OCI-LY7 (cell line): ENCODE measurements at regions of chr6 and their contacts with region 1.

Region 1: DNA sequence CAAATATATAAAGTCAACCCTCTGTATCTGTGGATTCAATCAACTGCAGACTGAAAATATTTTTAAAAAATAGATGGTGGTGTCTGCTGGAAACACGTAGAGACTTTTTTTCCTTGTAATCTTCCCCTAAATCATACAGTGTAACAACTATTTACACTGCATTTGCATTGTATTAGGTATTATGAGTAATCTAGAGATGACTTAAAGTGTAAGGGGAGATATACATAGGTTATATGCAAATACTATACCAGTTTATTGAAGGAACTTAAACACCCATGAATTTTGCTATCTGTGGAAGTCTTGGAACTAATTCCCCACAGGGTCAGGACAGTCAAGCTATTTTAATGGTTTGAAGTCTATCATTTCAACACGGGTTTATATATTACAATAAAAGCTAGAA is 10.2 kb downstream of the HDAC2 start:
- DNase-seq: no peak
- H3K4me3 ChIP-seq: no peak overlapping the region
- H3K27ac ChIP-seq: no peak overlapping the region
- H3K4me1 ChIP-seq: no peaks in the 10 kb centered on the region
- CTCF ChIP-seq: no peak

Region 2: GRCh38 chr6:113873043-113873667 is 87.6 kb before region 1 on chr6:
- CTCF ChIA-PET with region 1: no interaction called
- POLR2A ChIA-PET with region 1: no interaction called
- intact Hi-C with region 1: no loop called
- DNase-seq: peak; percentile 51
- H3K4me3 ChIP-seq: no peak overlapping the region
- H3K27ac ChIP-seq: no peak overlapping the region
- H3K4me1 ChIP-seq: no peaks in the 10 kb centered on the region
- CTCF ChIP-seq: no peak

Region 3: GRCh38 chr6:113936093-113936934 is 24.5 kb before region 1 on chr6:
- CTCF ChIA-PET with region 1: no interaction called
- POLR2A ChIA-PET with region 1: interaction called, 25 read pairs
- intact Hi-C with region 1: no loop called
- DNase-seq: peak; percentile 60
- H3K4me3 ChIP-seq: no peak overlapping the region
- H3K27ac ChIP-seq: no peak overlapping the region
- H3K4me1 ChIP-seq: no peaks in the 10 kb centered on the region
- CTCF ChIP-seq: peak; percentile 85

Region 4: GRCh38 chr6:113944701-113945100 is 16.1 kb before region 1 on chr6:
- CTCF ChIA-PET with region 1: no interaction called
- POLR2A ChIA-PET with region 1: interaction called, 25 read pairs
- intact Hi-C with region 1: no loop called
- DNase-seq: no peak
- H3K4me3 ChIP-seq: no peak overlapping the region
- H3K27ac ChIP-seq: no peak overlapping the region
- H3K4me1 ChIP-seq: no peaks in the 10 kb centered on the region
- CTCF ChIP-seq: no peak

Region 5: DNA sequence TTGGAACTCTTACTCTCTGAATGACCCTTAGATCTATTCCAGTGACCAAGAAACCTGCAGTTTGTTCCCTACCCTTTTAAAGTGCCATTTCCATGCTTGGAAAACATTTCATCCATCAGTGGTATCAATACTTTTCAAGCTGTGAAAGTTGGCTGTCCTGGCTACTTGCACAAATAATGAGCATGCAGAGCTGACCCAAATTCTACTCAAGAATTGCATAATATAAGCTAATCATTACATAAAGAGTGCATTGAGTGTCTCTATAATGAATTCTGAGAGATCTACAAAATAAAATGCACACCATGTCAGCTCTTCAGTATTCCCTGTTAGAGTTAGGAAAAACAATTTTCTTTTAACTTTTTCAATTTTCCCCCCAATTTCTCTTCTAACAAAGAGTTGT is 563.3 kb after region 1 on chr6:
- CTCF ChIA-PET with region 1: no interaction called
- POLR2A ChIA-PET with region 1: no interaction called
- intact Hi-C with region 1: no loop called
- DNase-seq: no peak
- H3K4me3 ChIP-seq: no peak overlapping the region
- H3K27ac ChIP-seq: no peak overlapping the region
- H3K4me1 ChIP-seq: no peaks in the 10 kb centered on the region
- CTCF ChIP-seq: no peak